Gastrocnemius medialis (tissue), 4 donors: ENCODE measurements at regions of chr16 and their contacts with region 1.

Region 1: DNA sequence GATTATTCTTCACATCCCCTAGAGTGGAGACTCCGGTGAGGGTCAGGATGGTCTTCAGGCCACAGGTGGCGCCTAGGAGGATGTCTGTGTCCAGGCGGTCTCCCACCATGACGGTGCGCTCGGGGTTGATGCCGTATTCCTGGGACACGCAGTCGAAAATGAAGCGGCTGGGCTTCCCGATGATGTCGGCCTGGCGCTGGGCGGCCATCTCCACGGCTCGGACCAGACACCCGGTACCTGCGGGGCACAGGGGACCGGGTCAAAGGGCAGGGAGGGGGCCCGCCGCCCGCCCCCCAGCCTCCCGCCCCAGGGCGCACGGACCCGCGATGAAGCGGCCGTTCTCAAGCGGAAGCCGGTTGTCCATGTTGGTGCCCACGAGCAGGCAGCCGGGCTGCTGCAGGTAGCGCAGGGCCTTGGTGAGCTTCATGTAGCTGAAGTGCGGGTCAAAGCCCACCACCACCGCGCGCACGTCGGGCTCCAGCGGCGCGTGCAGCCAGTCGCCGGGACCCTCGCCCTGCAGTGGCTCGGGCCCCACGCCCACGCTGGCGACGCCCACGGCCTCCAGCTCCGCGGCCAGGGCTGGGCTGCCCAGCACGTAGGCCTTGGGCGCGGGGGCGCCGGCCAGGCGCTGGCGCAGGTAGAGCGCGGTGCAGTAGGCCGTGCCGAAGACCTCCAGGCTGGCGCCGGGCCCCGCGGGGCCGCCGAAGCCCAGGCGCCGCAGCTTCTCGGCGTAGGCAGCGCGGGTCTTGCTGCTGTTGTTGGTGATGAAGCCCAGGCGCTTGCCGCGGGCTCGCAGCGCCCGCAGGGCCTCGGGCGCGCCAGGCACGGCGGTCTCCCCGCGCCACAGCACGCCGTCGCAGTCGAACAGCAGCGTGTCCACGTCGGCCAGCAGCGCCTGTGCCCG is 571 bp downstream of the PGP start:
- DNase-seq: no peak
- ATAC-seq: peak; percentile 0 to 1
- H3K4me3 ChIP-seq: peak overlapping the region; percentile 54 to 73 (median 64)
- H3K27ac ChIP-seq: peak overlapping the region; percentile 77 to 91 (median 88)
- H3K4me1 ChIP-seq: peaks cover 36 to 42% of the 10 kb centered on the region in 2 donors
- H3K27me3 ChIP-seq: no peaks in the 10 kb centered on the region
- CTCF ChIP-seq: no peak
- POLR2A ChIP-seq: peak; percentile 38 to 66

Region 2: GRCh38 chr16:1772736-1773584 is 441.1 kb before region 1 on chr16 and contains the starts of genes EME2 and MRPS34:
- in situ Hi-C with region 1: no loop called
- intact Hi-C with region 1: loop called (anchors 10 kb)
- DNase-seq: peak; percentile 69 to 71
- ATAC-seq: peak; percentile 75 to 77
- H3K4me3 ChIP-seq: peak within 1 kb of the TSS; percentile 70 to 99 (median 79)
- H3K27ac ChIP-seq: peak within 1 kb of the TSS; percentile 77 to 99 (median 94)
- H3K4me1 ChIP-seq: peaks cover 24 to 41% of the 10 kb centered on the region in 2 donors
- H3K27me3 ChIP-seq: no peaks in the 10 kb centered on the region
- CTCF ChIP-seq: peak; percentile 65 to 89 (median 74)
- POLR2A ChIP-seq: peak; percentile 30 to 57
- total RNA-seq, gene EME2: 2.1 to 9.2 (median 6.2) TPM
- total RNA-seq, gene MRPS34: 65.4 to 120 (median 90.0) TPM

Region 3: DNA sequence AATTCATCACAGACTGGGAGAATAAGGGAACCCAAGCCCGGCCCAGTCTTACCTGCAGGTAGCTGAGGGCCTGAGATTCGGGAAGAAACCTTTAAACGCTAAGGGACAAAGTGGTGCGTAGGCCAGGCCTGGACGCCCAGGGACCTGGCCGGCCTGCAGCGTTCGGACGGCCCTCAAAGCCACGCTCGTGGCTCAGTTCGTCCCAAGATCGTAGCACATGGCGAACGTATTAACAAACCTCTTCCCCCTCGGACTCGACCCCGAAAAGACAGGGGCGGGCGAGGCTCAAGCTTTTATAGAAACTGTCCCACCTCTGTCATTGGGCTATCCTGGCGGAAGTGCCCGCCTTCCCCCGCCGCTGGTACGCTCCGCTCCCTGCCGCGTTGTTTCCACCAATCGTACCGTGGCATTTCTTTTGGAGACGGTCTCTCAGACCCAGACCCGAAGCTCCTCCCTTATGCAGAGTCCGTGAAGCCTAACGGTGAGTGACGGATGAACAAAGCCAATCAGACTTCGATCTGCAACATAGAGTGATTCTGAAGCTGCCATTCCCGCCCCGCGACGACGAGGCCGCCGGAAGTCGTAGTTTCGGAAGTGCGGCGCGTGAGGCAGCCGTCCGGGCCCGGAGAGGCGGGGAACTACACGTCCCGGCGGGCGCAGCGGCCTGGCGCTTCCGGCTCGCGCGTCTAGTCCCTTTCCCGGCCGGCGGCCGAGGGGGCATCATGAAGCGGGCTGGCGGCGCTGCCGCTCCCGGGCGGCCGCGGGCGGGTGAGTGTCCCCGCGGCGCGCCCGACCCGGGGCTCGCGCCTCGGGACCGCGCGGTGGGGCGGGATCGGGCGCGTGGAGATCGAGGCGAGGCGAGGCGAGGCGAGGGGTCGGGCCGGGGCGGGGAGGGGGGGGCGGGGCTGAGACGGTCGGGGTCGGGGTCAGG is 58.7 kb before region 1 on chr16 and contains the start of gene TRAF7:
- in situ Hi-C with region 1: no loop called
- intact Hi-C with region 1: loop called (anchors 1 kb)
- DNase-seq: peak; percentile 99 to 100
- ATAC-seq: peak; percentile 95 to 98
- H3K4me3 ChIP-seq: peak within 1 kb of the TSS; percentile 71 to 89 (median 82)
- H3K27ac ChIP-seq: peak within 1 kb of the TSS; percentile 84 to 90 (median 86)
- H3K4me1 ChIP-seq: peaks cover 53 to 66% of the 10 kb centered on the region in 2 donors
- H3K27me3 ChIP-seq: no peaks in the 10 kb centered on the region
- CTCF ChIP-seq: peak in 1 of 5 experiments; percentile 3
- POLR2A ChIP-seq: peak; percentile 99
- total RNA-seq, gene TRAF7: 39.5 to 71.4 (median 55.9) TPM

Region 4: DNA sequence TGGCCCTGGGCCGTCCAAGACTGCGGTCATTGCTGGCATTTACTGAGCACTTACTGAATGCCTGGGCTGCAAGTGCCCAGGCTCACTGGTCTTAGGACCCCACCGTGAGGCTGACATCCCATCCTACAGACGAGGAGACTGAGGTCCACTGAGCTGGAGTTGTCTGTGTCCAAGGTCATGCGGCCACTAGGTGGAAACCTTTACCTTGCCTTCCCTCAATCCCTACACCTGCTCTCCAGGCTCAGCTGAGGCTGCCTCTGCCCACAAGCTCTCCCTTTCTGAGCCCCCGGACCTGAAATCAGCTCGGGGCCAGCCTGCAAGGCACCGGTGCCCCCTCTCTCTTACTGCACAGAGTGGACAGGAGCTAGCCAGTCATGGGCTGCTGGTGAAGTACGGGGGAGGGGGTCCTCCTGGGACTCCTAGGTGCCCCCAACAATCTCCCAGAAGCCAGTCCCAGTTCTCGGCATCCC is 19.2 kb before region 1 on chr16:
- in situ Hi-C with region 1: no loop called
- intact Hi-C with region 1: no loop called
- DNase-seq: peak; percentile 29 to 49
- ATAC-seq: peak; percentile 80 to 88
- H3K4me3 ChIP-seq: no peak overlapping the region
- H3K27ac ChIP-seq: no peak overlapping the region
- H3K4me1 ChIP-seq: peaks cover 7 to 10% of the 10 kb centered on the region in 2 donors
- H3K27me3 ChIP-seq: peaks cover 27 to 36% (median 33%) of the 10 kb centered on the region in 3 donors
- CTCF ChIP-seq: peak in 4 of 5 experiments; percentile 51 to 66 (median 58)
- POLR2A ChIP-seq: no peak